ENCODE measurements at regions of chr11 and their contacts with region 1.

Region 1: DNA sequence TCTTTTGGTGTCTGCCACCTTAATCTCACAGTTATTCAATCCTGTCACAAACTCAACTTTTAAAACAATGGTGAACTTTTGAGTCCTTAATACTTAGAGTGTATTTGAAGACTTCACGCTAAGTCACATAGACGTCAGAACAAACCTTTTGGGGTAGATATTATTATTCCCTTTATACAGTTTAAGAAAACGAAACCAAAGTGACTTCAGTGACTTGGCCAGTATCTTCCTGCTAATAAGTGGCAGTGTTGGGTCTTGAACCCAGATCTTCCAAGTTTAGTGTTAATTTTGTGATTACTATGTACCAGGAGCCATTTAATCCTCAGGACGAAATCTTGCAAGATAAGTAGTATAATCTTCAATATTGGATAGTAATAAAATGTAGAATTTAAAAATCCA is 694 bp downstream of the CEP295 start:
- DNase-seq: no peak
- H3K4me3 Mint-ChIP-seq: peak overlapping the region; percentile 94
- H3K27ac Mint-ChIP-seq: peak overlapping the region; percentile 95
- H3K4me1 Mint-ChIP-seq: peaks cover 43% of the 10 kb centered on the region
- H3K27me3 Mint-ChIP-seq: no peaks in the 10 kb centered on the region

Region 2: DNA sequence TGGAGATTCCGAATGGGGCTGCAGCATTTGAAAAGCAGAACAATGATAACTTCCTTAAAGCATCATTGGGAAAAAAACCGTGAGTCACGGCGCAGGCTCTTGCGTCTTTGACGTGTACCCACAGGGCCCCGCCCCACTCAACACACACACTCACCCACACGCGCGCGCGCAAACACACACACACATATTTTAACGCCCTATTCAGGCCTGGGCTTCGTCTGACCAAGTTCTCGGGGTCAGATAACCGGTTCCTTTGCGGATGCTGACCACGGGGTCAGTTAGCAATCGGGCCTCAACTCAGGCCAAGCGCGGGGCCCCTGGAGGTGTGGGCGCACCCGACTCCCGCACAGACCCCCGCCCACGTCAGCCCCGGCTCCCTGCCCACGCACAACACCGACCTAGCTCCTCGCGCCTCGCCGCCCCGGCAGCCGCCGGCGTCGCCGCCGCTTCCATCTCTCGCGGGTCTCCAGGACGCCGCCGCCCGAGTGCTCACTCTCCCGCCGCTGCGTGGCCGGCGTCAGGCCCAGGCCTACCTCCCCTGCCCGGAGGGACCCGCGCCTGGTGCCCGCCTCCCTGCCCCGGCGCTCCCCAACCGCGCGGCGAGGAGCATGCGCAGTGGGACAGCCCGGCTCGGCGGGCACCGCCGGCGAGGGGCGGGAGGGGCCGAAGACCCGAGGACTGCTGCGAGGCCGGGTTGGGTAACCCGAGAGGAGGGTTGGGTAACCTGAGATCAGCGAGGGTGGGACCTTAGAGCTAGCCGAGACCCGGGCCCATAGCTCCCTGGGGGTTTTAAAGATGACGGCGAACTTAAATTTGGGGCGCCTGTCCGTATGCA is 464.6 kb before region 1 on chr11 and contains the start of gene SLC36A4:
- CTCF ChIA-PET with region 1: no interaction called
- POLR2A ChIA-PET with region 1: interaction called, 4 read pairs
- intact Hi-C with region 1: loop called (anchors 1 kb)
- DNase-seq: peak; percentile 92
- H3K4me3 Mint-ChIP-seq: peak within 1 kb of the TSS; percentile 98
- H3K27ac Mint-ChIP-seq: peak within 1 kb of the TSS; percentile 94
- H3K4me1 Mint-ChIP-seq: peaks cover 23% of the 10 kb centered on the region
- H3K27me3 Mint-ChIP-seq: peaks cover 2% of the 10 kb centered on the region
- total RNA-seq, gene SLC36A4: 13.9 to 14.0 TPM

Region 3: DNA sequence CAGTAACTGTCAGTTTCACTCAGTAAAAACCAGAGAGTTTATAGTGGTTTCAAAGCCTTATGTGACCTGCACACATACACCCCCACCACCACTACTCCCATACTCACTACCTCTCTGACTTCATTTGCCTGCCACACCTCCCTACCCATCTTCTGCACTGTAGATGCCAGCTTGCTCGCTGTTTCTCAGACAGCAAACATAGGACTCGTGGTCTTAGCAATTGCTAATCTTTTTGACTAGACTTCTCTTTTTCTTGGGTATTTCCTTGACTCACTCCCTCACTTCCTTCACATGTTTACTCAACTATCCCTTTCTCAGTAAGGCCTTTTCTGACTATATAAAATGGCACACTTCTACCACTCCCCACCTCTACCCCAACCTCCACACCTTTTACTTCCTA is 27.1 kb after region 1 on chr11:
- CTCF ChIA-PET with region 1: no interaction called
- POLR2A ChIA-PET with region 1: interaction called, 3 read pairs
- intact Hi-C with region 1: loop called (anchors 2 kb)
- DNase-seq: peak; percentile 73
- H3K4me3 Mint-ChIP-seq: no peak overlapping the region
- H3K27ac Mint-ChIP-seq: peak overlapping the region; percentile 91
- H3K4me1 Mint-ChIP-seq: peaks cover 17% of the 10 kb centered on the region
- H3K27me3 Mint-ChIP-seq: no peaks in the 10 kb centered on the region

Measured in activated CD4-positive, alpha-beta memory T cell treated with anti-CD3 and anti-CD28 coated beads for 36 hours (primary cell).